ENCODE measurements at regions of chr11 and their contacts with region 1.

Region 1: GRCh38 chr11:70755410-70756161 is 357.3 kb downstream of the CTTN start:
- DNase-seq: peak; percentile 66 to 72 (median 66)
- ATAC-seq: peak; percentile 74
- H3K4me3 ChIP-seq: no peak overlapping the region
- H3K27ac ChIP-seq: no peak overlapping the region
- H3K4me1 ChIP-seq: no peaks in the 10 kb centered on the region
- H3K27me3 ChIP-seq: no peaks in the 10 kb centered on the region
- CTCF ChIP-seq: peak; percentile 73 to 95 (median 85)
- POLR2A ChIP-seq: no peak

Region 2: DNA sequence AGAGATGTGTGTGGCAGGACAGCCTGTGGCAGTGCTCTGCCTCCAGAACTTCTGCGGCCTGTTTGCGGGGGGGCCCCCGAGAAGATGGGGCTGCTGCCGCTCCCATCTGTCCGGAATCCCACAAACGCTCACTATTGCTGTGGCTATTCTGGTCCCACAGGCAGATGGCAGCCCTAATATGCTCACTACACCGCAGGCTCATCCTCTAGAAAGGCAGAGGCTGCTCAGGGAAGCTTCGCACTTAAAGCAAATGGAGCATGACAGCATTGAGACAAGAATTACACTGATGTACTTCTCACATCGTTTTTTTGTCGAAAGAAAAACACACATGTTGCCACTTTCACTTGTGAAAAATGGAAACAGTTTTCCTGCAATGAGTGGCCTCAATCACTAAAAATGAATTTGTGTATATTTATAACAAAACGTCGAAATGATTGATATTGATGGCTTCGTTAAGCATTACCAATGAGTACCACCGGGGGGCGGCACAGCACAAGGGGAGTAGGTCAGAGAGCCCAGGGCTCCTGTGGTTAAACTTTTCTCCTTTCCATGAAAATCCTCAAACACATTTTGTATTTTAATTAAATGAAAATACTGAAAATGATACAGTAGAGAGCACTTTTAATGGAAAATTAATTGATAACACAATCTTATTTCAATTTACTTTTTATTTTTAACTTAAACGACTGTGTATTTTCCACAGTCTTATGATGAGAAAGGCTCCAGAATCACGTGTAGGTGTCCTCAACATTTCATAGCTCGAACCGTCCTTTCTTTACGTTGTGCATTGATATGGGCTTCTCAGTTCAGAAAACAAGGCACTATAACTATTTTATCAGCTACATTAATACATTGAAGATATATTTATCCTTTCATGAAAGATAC is 288.1 kb before region 1 on chr11:
- intact Hi-C with region 1: loop called (anchors 10 kb)
- DNase-seq: peak; percentile 52 to 70 (median 60)
- ATAC-seq: peak; percentile 57
- H3K4me3 ChIP-seq: no peak overlapping the region
- H3K27ac ChIP-seq: no peak overlapping the region
- H3K4me1 ChIP-seq: no peaks in the 10 kb centered on the region
- H3K27me3 ChIP-seq: no peaks in the 10 kb centered on the region
- CTCF ChIP-seq: peak; percentile 74 to 86 (median 82)
- POLR2A ChIP-seq: no peak

Region 3: GRCh38 chr11:70804139-70804837 is 48.7 kb after region 1 on chr11:
- intact Hi-C with region 1: no loop called
- DNase-seq: no peak
- ATAC-seq: no peak
- H3K4me3 ChIP-seq: no peak overlapping the region
- H3K27ac ChIP-seq: no peak overlapping the region
- H3K4me1 ChIP-seq: no peaks in the 10 kb centered on the region
- H3K27me3 ChIP-seq: no peaks in the 10 kb centered on the region
- CTCF ChIP-seq: no peak
- POLR2A ChIP-seq: no peak

Measured in body of pancreas (tissue), 4 donors.